Activated CD8-positive, alpha-beta T cell treated with anti-CD3 and anti-CD28 coated beads, Interleukin-2, amount 10 ng/mL, durations not matched to agents 7 days and 5 days (primary cell): ENCODE measurements at regions of chr20 and their contacts with region 1.

Region 1: GRCh38 chr20:354298-355064 is 7.6 kb downstream of the NRSN2 start:
- DNase-seq: peak; percentile 87
- ATAC-seq: peak; percentile 98
- H3K4me3 Mint-ChIP-seq: no peak overlapping the region
- H3K27ac Mint-ChIP-seq: no peak overlapping the region
- H3K4me1 Mint-ChIP-seq: peaks cover 28% of the 10 kb centered on the region
- H3K27me3 Mint-ChIP-seq: peaks cover 4% of the 10 kb centered on the region

Region 2: GRCh38 chr20:297098-297924 is 57.2 kb before region 1 on chr20 and contains the start of gene ZCCHC3:
- CTCF ChIA-PET with region 1: no interaction called
- POLR2A ChIA-PET with region 1: no interaction called
- DNase-seq: peak; percentile 89
- ATAC-seq: peak; percentile 87
- H3K4me3 Mint-ChIP-seq: peak within 1 kb of the TSS; percentile 99
- H3K27ac Mint-ChIP-seq: peak within 1 kb of the TSS; percentile 99
- H3K4me1 Mint-ChIP-seq: peaks cover 54% of the 10 kb centered on the region
- H3K27me3 Mint-ChIP-seq: no peaks in the 10 kb centered on the region
- total RNA-seq, gene ZCCHC3: 28.4 to 29.0 TPM

Region 3: DNA sequence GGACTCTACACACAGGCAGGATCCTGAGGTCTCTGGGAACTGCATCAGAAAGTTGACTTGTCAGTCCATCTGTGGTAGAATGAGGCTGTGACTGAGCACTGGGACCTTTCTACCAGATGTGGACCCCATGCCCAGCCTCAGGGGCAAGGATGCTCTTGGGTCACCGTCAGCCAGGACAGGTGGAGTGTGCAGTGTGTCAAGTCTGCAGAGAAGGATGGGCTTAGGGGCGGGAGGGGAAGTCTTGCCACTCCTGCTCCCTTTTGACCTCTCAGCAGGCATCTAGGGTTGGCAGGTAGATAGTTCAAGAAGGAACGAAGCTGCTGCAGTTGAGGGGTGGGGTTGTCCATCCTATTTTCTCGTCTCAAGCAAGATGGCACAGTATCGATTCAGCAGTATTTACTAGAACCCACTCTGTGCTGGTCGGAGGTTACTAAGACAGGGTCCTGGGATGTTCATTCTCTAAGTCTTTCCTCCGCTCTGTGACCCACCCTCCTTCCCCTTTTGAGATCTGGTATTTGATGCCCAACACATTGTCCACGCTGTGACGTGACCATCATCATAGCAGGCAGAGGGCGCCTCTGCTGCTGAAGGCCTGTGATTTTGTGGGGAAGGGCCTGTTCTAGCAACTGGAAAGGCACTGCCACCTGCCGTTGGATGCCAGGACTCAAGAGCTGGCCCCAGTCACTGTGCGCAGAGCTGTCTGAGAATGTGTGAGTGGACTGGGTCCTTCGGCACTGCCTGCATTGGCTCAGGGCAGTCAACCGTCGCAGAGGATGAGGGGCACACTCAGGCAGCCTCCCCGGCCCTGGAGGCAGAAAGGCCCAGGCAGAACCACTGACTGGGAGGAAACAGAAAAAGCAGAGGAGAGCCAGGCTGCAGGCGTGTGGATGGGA is 76.8 kb after region 1 on chr20:
- CTCF ChIA-PET with region 1: interaction called, 14 read pairs
- POLR2A ChIA-PET with region 1: no interaction called
- DNase-seq: peak; percentile 57
- ATAC-seq: no peak
- H3K4me3 Mint-ChIP-seq: no peak overlapping the region
- H3K27ac Mint-ChIP-seq: peak overlapping the region; percentile 75
- H3K4me1 Mint-ChIP-seq: peaks cover 63% of the 10 kb centered on the region
- H3K27me3 Mint-ChIP-seq: no peaks in the 10 kb centered on the region